Activated CD4-positive, alpha-beta T cell treated with anti-CD3 and anti-CD28 coated beads for 36 hours (primary cell): ENCODE measurements at regions of chr5 and their contacts with region 1.

Region 1: DNA sequence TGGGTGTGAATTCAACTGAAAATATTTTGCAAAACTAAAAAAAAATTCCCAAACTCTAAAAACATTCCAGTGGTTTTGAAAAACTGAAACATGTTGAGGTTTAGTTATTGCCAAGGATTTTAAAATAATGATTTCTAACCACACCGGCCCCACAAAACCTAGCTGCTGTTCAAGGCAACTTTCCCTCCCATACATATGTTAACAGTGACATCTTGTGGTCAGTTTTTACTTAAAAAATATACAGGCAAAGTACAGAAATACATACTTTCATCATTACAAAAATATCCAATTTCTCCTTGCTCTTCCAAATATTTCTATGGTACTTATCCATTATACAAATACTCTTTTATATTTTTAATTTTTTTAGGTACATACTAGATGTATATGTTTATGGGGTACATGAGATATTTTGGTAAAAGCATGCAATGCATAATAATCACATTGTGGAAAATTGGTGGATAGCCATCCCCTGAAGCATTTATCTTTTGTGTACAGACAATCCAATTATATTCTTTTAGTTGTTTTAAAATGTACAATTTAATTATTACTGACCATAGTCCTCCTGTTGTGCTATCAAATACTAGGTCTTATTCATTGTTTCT is 34.4 kb upstream of the MRPS30 start:
- DNase-seq: no peak
- ATAC-seq: no peak
- H3K4me3 Mint-ChIP-seq: no peak overlapping the region
- H3K27ac Mint-ChIP-seq: no peak overlapping the region
- H3K4me1 Mint-ChIP-seq: no peaks in the 10 kb centered on the region
- H3K27me3 Mint-ChIP-seq: peaks cover 12% of the 10 kb centered on the region

Region 2: DNA sequence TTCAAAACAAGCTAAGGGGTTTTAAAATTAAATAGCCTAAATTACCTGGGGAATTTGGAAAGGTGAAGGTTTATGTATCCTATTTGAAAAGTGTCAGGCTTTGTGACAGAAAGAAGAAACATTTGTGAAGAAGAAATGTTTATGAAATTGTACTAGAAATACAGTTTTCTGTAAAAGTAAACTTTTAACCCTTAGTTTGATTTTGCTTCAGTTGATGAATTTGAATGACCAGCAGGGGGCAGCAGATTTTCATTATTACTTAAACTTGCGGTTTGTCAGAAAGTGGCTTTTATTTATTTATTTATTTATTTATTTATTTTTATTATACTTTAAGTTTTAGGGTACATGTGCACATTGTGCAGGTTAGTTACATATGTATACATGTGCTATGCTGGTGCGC is 1113.3 kb before region 1 on chr5:
- CTCF ChIA-PET with region 1: no interaction called
- POLR2A ChIA-PET with region 1: no interaction called
- intact Hi-C with region 1: loop called in 1 of 2 experiments (anchors 10 kb)
- DNase-seq: peak; percentile 52
- ATAC-seq: no peak
- H3K4me3 Mint-ChIP-seq: no peak overlapping the region
- H3K27ac Mint-ChIP-seq: no peak overlapping the region
- H3K4me1 Mint-ChIP-seq: no peaks in the 10 kb centered on the region
- H3K27me3 Mint-ChIP-seq: no peaks in the 10 kb centered on the region

Region 3: GRCh38 chr5:43729846-43730478 is 1044.4 kb before region 1 on chr5:
- CTCF ChIA-PET with region 1: interaction called, 4 read pairs
- POLR2A ChIA-PET with region 1: no interaction called
- intact Hi-C with region 1: loop called (anchors 2 to 10 kb)
- DNase-seq: no peak
- ATAC-seq: no peak
- H3K4me3 Mint-ChIP-seq: no peak overlapping the region
- H3K27ac Mint-ChIP-seq: no peak overlapping the region
- H3K4me1 Mint-ChIP-seq: no peaks in the 10 kb centered on the region
- H3K27me3 Mint-ChIP-seq: peaks cover 17% of the 10 kb centered on the region

Region 4: DNA sequence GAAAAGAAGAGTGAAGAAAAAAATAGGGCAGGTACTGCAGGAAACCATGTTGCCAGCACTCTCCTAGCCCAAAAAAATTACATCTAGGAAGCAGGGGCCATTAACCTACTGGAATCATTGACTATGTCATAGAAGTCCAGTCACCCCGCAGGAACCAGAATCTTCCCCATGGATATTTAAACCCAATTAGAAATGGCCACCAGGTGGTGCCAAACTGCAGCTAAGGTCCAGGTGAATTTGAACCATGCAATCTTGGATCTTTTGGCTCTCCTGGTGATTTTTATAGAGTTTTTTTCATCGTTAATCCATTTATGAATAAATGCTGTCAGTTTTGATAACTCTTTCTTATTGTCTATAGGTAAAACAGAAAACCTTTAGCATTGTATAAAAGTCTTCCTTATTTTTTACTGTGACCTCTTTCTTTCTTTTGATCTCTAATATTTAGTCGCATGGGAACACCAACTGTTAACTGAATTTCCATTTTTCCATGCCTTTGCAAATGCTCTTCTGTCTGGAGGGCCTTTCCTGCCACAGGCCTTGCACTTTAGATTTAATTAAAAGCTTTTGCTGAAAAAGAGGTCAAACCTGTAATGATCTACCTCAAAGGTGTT is 237.6 kb before region 1 on chr5:
- CTCF ChIA-PET with region 1: interaction called, 4 read pairs
- POLR2A ChIA-PET with region 1: no interaction called
- intact Hi-C with region 1: loop called (anchors 1 to 2 kb)
- DNase-seq: peak; percentile 40
- ATAC-seq: no peak
- H3K4me3 Mint-ChIP-seq: no peak overlapping the region
- H3K27ac Mint-ChIP-seq: no peak overlapping the region
- H3K4me1 Mint-ChIP-seq: no peaks in the 10 kb centered on the region
- H3K27me3 Mint-ChIP-seq: no peaks in the 10 kb centered on the region